Panc1 (cell line): ENCODE measurements at regions of chr17 and their contacts with region 1.

Region 1: GRCh38 chr17:45834471-45835396 is 9.9 kb upstream of the SPPL2C start:
- DNase-seq: no peak
- ATAC-seq: no peak
- H3K4me3 ChIP-seq: no peak overlapping the region
- H3K27ac ChIP-seq: no peak overlapping the region
- H3K4me1 ChIP-seq: no peaks in the 10 kb centered on the region
- H3K27me3 ChIP-seq: no peaks in the 10 kb centered on the region
- CTCF ChIP-seq: no peak

Region 2: DNA sequence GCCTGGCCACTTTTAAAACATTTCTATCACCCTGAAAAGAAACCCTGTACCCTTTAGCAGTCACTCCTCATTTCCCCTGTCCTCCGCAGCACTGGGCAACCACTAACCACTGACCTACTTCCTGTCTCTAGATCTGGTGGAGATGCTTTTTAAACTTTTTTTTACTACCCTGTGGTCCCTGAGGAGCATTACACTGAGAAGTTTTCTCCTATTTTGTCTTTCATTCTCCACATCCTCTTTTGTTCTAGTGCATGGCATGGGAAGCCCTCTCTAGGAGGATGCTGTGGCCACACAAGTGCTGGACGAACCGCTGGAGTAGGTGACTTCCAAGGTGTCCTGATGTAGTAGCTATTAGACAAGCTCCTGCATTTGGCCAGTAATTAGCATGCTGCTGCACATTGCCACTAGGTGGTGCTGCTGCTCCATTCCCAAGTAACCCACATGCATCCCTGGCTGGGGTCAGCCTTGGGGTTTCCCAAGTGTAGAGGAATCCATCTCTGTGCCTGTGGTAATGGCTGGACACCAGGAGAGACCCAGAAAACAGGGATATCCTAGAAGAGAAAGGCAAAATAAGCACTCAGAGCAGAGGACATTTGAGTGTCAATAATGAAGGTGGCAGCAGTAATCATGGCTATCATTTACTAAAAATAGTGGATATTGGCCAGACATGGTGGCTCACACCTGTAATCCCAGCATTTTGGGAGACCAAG is 194.4 kb before region 1 on chr17:
- CTCF ChIA-PET with region 1: interaction called, 8 read pairs
- POLR2A ChIA-PET with region 1: no interaction called
- in situ Hi-C with region 1: no loop called
- intact Hi-C with region 1: loop called (anchors 5 kb)
- DNase-seq: peak; percentile 61
- ATAC-seq: peak; percentile 93
- H3K4me3 ChIP-seq: no peak overlapping the region
- H3K27ac ChIP-seq: no peak overlapping the region
- H3K4me1 ChIP-seq: no peaks in the 10 kb centered on the region
- H3K27me3 ChIP-seq: no peaks in the 10 kb centered on the region
- CTCF ChIP-seq: peak; percentile 94

Region 3: DNA sequence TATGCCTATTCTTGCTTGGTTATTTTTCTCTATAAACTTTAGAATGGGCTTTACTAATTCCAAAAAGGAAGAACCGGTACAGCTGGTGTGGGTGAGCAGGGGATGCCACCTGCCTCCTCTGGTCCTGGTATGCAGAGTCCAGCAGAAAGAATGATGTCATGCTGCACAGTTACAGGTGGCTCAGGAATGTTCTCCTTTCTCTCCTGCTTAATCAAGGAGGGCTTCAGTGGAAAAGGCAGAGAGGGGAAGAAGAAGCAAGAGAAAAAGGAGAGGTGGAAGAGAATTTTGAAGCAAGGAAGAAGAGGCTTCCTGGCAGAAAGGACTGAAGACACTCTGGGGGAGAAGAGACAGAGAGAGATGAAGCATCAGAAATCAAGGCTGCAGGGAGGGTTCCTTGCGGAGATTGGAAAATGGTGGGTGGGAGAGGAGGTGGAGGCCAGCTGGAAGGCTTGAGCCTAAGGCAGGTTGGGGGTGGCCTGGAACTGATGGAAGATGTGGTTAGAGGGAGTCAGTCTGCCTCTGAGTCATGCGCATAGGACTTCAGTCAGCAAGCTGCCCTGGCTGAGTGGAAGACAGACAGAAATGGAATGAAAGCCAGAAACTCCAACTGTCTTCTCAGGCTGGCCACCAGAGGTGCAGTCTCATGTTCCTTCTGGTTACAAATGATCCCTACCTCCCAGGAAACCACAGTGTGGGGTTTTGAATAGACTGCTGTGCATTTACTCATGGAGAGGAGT is 115.2 kb before region 1 on chr17:
- CTCF ChIA-PET with region 1: interaction called, 3 read pairs
- POLR2A ChIA-PET with region 1: no interaction called
- in situ Hi-C with region 1: no loop called
- intact Hi-C with region 1: loop called (anchors 10 kb)
- DNase-seq: no peak
- ATAC-seq: peak; percentile 87
- H3K4me3 ChIP-seq: no peak overlapping the region
- H3K27ac ChIP-seq: no peak overlapping the region
- H3K4me1 ChIP-seq: peaks cover 3% of the 10 kb centered on the region
- H3K27me3 ChIP-seq: no peaks in the 10 kb centered on the region; the same call in 1 of the 2 replicates
- CTCF ChIP-seq: peak; percentile 63

Region 4: DNA sequence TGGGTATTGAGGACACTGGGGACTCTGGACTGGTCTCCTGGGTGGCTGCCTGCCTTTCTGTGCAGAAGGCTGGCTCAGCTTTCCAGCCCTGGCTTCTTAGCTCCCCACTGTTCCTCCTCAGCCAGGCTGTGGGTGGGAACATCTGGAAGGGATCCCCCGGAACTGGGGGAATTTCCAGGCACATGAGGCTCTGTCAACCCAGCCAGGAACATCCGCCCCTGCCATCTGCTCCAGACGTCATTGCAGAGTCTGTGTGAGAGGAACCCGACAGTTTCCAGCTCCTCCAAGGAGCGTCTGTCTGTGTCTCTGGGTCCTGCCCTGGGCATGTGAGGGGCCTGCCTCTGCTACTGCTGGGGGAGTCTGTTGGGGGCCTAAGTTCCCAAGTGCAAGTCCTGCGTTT is 86.8 kb before region 1 on chr17:
- CTCF ChIA-PET with region 1: no interaction called
- POLR2A ChIA-PET with region 1: no interaction called
- in situ Hi-C with region 1: no loop called
- intact Hi-C with region 1: no loop called
- DNase-seq: no peak
- ATAC-seq: no peak
- H3K4me3 ChIP-seq: no peak overlapping the region
- H3K27ac ChIP-seq: no peak overlapping the region
- H3K4me1 ChIP-seq: no peaks in the 10 kb centered on the region
- H3K27me3 ChIP-seq: peaks cover 3% of the 10 kb centered on the region; the same call in 1 of the 2 replicates
- CTCF ChIP-seq: no peak

Region 5: DNA sequence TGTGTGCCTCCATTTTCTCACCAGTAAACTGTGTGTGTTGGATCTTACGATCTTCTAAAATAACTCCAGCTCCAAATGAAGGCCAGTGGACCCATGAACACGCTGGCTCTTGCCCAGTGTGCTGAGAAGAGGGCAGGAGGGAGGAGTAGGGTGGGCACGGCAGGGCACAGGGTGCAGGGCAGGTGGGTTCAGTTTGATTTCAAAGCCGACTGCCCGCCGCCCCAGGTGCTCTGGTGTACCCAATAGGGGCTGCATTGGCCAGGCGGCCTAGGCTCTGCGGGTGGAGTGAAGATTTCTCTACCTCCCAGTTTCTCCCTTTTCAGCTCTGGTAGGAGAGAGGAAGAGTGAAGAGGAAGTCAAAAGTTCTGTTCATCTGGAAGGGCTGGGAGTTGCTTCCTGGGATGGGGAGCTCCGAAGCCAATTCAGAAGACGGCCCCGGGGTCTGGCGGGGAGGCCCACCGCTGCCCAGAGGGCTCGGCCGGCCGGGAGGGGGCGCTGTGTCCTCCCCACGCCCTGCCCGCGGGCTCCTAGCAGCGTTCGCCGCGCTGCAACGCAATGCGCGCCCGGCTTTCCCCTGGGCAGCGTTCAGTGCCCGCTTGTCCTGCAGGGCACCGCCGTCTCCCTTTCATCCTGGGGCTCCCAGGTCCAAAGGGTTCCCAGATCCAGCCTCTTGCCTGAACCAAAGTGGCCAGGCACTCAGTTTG is 51.7 kb before region 1 on chr17:
- CTCF ChIA-PET with region 1: no interaction called
- POLR2A ChIA-PET with region 1: no interaction called
- in situ Hi-C with region 1: no loop called
- intact Hi-C with region 1: loop called (anchors 5 kb)
- DNase-seq: no peak
- ATAC-seq: peak; percentile 81
- H3K4me3 ChIP-seq: peak overlapping the region; percentile 39 to 43
- H3K27ac ChIP-seq: no peak overlapping the region
- H3K4me1 ChIP-seq: no peaks in the 10 kb centered on the region
- H3K27me3 ChIP-seq: no peaks in the 10 kb centered on the region; the same call in 1 of the 2 replicates
- CTCF ChIP-seq: peak; percentile 85